CD8-positive, alpha-beta T cell (primary cell): ENCODE measurements at regions of chr3 and their contacts with region 1.

Region 1: GRCh38 chr3:101478980-101479379 is 34.0 kb downstream of the SENP7 start:
- DNase-seq: no peak
- ATAC-seq: no peak
- H3K4me3 ChIP-seq: no peak overlapping the region
- H3K4me3 Mint-ChIP-seq: no peak overlapping the region
- H3K27ac ChIP-seq: no peak overlapping the region
- H3K27ac Mint-ChIP-seq: peak overlapping the region; percentile 47
- H3K4me1 ChIP-seq: peaks cover 9% of the 10 kb centered on the region
- H3K4me1 Mint-ChIP-seq: peaks cover 58% of the 10 kb centered on the region
- H3K27me3 ChIP-seq: no peaks in the 10 kb centered on the region
- H3K27me3 Mint-ChIP-seq: no peaks in the 10 kb centered on the region
- CTCF ChIP-seq: no peak

Region 2: GRCh38 chr3:100999160-100999559 is 479.8 kb before region 1 on chr3:
- CTCF ChIA-PET with region 1: no interaction called
- POLR2A ChIA-PET with region 1: no interaction called
- intact Hi-C with region 1: no loop called
- DNase-seq: no peak
- ATAC-seq: no peak
- H3K4me3 ChIP-seq: no peak overlapping the region
- H3K4me3 Mint-ChIP-seq: no peak overlapping the region
- H3K27ac ChIP-seq: no peak overlapping the region
- H3K27ac Mint-ChIP-seq: no peak overlapping the region
- H3K4me1 ChIP-seq: no peaks in the 10 kb centered on the region
- H3K4me1 Mint-ChIP-seq: no peaks in the 10 kb centered on the region
- H3K27me3 ChIP-seq: no peaks in the 10 kb centered on the region
- H3K27me3 Mint-ChIP-seq: peaks cover 5% of the 10 kb centered on the region
- CTCF ChIP-seq: no peak

Region 3: DNA sequence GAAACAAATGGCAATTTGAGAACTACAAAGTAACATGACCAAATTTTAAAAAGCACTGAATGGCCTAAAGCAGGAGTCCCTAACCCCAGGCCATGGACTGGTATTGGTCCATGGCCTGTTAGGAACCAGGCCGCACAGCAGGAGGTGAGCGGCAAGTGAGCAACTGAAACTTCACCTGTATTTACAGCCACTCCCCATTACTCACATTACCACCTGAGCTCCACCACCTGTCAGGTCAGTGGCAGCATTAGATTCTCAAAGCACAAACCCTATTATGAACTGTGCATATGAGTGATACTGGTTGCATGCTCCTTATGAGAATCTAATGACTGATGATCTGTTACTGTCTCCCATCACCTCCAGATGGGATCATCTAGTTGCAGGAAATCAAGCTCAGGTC is 14.8 kb before region 1 on chr3:
- CTCF ChIA-PET with region 1: no interaction called
- POLR2A ChIA-PET with region 1: no interaction called
- intact Hi-C with region 1: loop called in 1 of 2 experiments (anchors 2 kb)
- DNase-seq: no peak
- ATAC-seq: no peak
- H3K4me3 ChIP-seq: no peak overlapping the region
- H3K4me3 Mint-ChIP-seq: no peak overlapping the region
- H3K27ac ChIP-seq: peak overlapping the region in 1 of 2 experiments; percentile 31
- H3K27ac Mint-ChIP-seq: peak overlapping the region; percentile 75
- H3K4me1 ChIP-seq: peaks cover 27% of the 10 kb centered on the region
- H3K4me1 Mint-ChIP-seq: peaks cover 77% of the 10 kb centered on the region
- H3K27me3 ChIP-seq: no peaks in the 10 kb centered on the region
- H3K27me3 Mint-ChIP-seq: no peaks in the 10 kb centered on the region
- CTCF ChIP-seq: no peak